ENCODE measurements at regions of chr15 and their contacts with region 1.

Region 1: GRCh38 chr15:40344631-40345120 is 3.9 kb upstream of the CCDC9B start:
- DNase-seq: peak in 1 of 2 experiments; percentile 83
- H3K4me3 ChIP-seq: no peak overlapping the region
- H3K27ac ChIP-seq: no peak overlapping the region
- H3K4me1 ChIP-seq: peaks cover 0 to 18% (median 10%) of the 10 kb centered on the region in 4 experiments; a peak in 6 of 7 replicates
- H3K27me3 ChIP-seq: no peaks in the 10 kb centered on the region
- CTCF ChIP-seq: peak; percentile 88 to 94 (median 89)
- EP300 ChIP-seq: no peak
- POLR2A ChIP-seq: no peak
- RAD21 ChIP-seq: peak; percentile 82 to 85

Region 2: DNA sequence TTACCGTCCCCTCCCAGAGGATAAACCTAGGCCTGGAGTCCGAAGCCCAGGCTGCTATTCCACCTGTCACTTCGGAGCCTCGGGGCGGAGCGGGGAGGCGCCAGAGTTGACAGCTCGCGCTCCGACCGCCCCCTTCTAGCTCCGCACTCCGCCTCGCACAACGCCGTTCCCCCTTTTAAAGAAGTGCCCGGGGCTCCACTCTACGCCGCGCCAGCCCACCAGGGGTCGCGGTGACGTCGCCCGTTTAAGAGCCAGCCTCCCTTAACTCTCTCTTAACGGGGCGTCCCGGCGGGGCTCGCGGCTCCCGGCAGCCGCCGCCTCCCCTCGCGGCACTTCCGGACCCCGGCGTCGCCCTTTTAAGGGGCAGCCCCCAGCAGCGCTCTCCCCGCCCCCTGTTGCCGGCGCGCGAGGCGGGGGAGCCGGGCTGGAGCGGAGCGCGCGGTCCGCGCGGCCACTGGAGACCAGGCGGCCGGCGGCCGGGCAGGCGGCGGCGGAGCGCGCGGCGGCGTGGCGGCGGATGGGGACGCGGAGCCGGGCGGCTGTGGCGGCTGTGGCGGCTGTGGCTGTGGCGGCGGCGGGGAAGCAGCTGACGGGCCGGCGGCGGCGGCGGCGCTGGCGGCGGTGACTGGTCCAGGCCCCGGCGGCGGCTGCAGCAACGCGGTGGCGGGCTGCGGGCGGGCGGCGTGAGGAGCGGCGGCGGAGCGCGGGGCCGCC is 21.3 kb before region 1 on chr15 and contains the start of gene INAFM2:
- CTCF ChIA-PET with region 1: interaction called, 584 read pairs
- POLR2A ChIA-PET with region 1: interaction called, 66 read pairs
- DNase-seq: peak; percentile 90 to 92
- H3K4me3 ChIP-seq: peak within 1 kb of the TSS; percentile 62 to 79 (median 70)
- H3K27ac ChIP-seq: no peak within 1 kb of the TSS
- H3K4me1 ChIP-seq: peaks cover 21 to 44% (median 31%) of the 10 kb centered on the region in 4 experiments
- H3K27me3 ChIP-seq: peaks cover 0 to 20% (median 9%) of the 10 kb centered on the region in 4 experiments; a peak in 4 of 7 replicates
- CTCF ChIP-seq: peak; percentile 22 to 36 (median 30)
- EP300 ChIP-seq: peak in 1 of 2 experiments; percentile 58; a peak in 1 of 3 replicates
- POLR2A ChIP-seq: peak in 1 of 2 experiments; percentile 49; a peak in 1 of 3 replicates
- RAD21 ChIP-seq: peak in 1 of 2 experiments; percentile 20; a peak in 1 of 4 replicates
- total RNA-seq, gene INAFM2: 35.1 and 38.2 TPM in 2 replicates

Region 3: DNA sequence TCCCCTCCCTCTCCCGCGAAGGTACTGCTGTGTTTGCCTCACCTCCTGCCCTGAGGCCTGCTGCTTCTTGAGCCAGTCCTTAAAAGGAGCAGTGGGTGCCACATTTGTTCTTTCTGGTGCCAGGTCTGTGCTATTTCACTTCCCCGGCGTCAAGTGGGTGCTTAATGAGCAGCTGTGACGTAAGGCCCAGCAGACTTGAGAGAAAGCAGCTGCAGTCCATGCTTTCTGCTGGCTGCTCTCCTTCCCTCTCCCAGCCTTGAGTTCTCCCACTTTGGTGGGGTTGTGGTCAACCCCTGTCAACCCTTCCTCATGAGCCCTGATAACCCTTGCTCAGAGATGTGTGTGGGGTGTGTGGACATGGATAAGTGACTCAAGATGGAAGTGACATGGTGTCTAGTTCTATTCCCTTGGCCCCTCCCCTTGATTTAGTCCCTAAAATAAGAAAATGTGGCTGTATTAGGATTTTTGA is 14.3 kb before region 1 on chr15:
- CTCF ChIA-PET with region 1: interaction called, 250 read pairs
- POLR2A ChIA-PET with region 1: interaction called, 66 read pairs
- DNase-seq: no peak
- H3K4me3 ChIP-seq: no peak overlapping the region
- H3K27ac ChIP-seq: no peak overlapping the region
- H3K4me1 ChIP-seq: peaks cover 24 to 42% (median 32%) of the 10 kb centered on the region in 4 experiments
- H3K27me3 ChIP-seq: peaks cover 0 to 1% (median 0%) of the 10 kb centered on the region in 4 experiments; a peak in 1 of 7 replicates
- CTCF ChIP-seq: no peak
- EP300 ChIP-seq: no peak
- POLR2A ChIP-seq: no peak
- RAD21 ChIP-seq: no peak

Region 4: DNA sequence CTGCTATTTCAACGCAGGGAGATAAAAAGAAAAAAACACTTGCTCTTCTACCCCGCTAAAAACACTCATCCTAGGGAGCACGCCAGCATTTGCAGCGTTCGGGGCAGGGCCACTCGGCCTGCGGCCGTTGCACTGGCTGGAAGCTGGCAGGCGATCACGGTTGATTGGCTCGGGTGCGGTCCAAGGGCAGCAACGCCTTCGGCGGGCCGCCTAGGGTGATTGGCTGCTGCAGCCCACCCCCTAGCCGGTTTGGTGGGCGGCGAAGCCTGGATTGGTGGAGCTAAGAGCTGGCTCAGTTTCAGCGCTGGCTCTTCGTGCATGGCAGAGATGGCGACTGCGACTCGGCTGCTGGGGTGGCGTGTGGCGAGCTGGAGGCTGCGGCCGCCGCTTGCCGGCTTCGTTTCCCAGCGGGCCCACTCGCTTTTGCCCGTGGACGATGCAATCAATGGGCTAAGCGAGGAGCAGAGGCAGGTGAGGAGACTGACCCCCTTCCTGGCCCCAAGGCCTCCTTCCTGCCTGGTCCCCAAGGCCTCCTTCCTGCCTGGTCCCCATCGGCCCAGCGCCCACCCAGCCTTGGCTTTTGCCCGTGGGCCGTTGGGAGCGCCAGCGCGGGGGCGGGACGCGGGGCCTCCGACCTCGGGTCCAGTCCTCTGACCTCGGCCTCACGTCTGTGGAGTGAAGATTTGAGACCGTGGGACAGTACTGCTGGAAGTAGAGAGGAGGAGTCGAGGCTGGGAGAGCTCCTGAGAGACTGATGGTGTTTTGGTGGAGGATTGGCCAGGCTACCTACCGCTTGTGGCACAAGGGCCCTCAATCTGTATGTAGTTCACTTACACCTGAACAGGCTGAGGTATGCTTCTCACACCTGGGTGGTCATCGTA is 61.1 kb after region 1 on chr15 and contains the start of gene IVD:
- CTCF ChIA-PET with region 1: interaction called, 184 read pairs
- POLR2A ChIA-PET with region 1: no interaction called
- DNase-seq: peak; percentile 78 to 92
- H3K4me3 ChIP-seq: peak within 1 kb of the TSS; percentile 67 to 82 (median 74)
- H3K27ac ChIP-seq: peak within 1 kb of the TSS; percentile 72; the same call in 1 of the 2 replicates
- H3K4me1 ChIP-seq: peaks cover 0 to 4% (median 1%) of the 10 kb centered on the region in 4 experiments; a peak in 3 of 7 replicates
- H3K27me3 ChIP-seq: no peaks in the 10 kb centered on the region
- CTCF ChIP-seq: no peak
- EP300 ChIP-seq: no peak
- POLR2A ChIP-seq: peak; percentile 84 to 88
- RAD21 ChIP-seq: no peak
- total RNA-seq, gene IVD: 78.8 and 80.0 TPM in 2 replicates